AG04450 (cell line): ENCODE measurements at regions of chr7 and their contacts with region 1.

Region 1: DNA sequence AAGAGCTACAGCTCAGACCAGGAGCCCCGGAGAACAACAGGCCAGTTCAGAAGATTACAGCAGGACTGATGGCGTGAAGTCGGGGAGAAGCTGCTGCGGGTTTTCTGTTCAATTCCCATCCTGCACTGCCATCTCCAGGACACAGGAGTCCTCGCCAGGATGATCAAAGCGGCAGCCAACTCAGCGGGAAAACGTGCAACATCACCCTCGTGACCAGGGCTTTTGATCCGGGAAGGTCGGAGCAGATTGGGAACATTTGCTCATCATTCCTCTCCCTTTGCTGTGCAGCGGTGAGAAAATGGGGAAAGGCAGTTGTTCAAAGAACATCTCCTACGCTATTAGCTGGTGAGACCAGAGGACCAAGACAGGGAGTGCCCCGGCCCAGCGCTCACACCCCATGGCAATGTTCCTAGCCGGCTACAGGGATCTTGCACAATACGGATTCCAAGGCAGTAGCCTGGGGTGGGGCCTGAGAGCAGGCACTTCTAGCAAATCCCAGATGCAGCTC is 50.4 kb upstream of the FOXK1 start:
- DNase-seq: peak; percentile 85
- H3K4me3 ChIP-seq: peak overlapping the region; percentile 57
- H3K27ac ChIP-seq: peak overlapping the region; percentile 80
- H3K27me3 ChIP-seq: peaks cover 7% of the 10 kb centered on the region
- CTCF ChIP-seq: peak; percentile 82

Region 2: GRCh38 chr7:4610768-4611467 is 20.8 kb before region 1 on chr7:
- CTCF ChIA-PET with region 1: interaction called, 63 read pairs
- POLR2A ChIA-PET with region 1: interaction called, 7 read pairs
- DNase-seq: no peak
- H3K4me3 ChIP-seq: no peak overlapping the region
- H3K27ac ChIP-seq: no peak overlapping the region
- H3K27me3 ChIP-seq: no peaks in the 10 kb centered on the region
- CTCF ChIP-seq: peak; percentile 86